ENCODE measurements at regions of chr16 and their contacts with region 1.

Region 1: DNA sequence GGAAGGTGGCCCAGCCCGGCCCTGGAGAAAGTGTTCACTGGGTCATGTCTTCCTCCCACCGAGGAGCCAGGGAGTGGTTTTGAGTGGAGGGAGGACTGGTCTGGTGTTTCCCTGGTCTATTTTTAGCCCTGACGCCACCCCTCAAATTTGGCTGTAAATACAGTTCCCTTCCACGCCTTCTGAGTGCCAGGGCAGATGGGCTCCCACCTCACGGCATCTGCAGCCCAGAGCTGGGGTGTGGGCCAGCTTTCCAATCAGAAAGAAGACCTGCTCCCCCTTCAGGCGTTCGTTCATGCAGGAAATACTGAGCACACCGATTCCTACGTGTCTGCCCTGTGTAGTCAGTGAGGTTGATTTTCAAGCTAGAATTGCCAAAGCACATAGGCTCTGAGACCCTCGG is 53.7 kb downstream of the SNX20 start:
- DNase-seq: peak in 7 of 9 donors; percentile 29 to 67 (median 57)
- ATAC-seq: peak; percentile 78
- H3K4me3 ChIP-seq: peak overlapping the region; percentile 29
- H3K4me3 Mint-ChIP-seq: peak overlapping the region; percentile 68 to 90 (median 84)
- H3K27ac ChIP-seq: peak overlapping the region; percentile 43
- H3K27ac Mint-ChIP-seq: peak overlapping the region; percentile 71 to 95 (median 88)
- H3K4me1 ChIP-seq: peaks cover 0 to 45% of the 10 kb centered on the region in 2 donors
- H3K4me1 Mint-ChIP-seq: peaks cover 29 to 50% (median 44%) of the 10 kb centered on the region in 7 donors
- H3K27me3 ChIP-seq: no peaks in the 10 kb centered on the region
- H3K27me3 Mint-ChIP-seq: no peaks in the 10 kb centered on the region

Region 2: DNA sequence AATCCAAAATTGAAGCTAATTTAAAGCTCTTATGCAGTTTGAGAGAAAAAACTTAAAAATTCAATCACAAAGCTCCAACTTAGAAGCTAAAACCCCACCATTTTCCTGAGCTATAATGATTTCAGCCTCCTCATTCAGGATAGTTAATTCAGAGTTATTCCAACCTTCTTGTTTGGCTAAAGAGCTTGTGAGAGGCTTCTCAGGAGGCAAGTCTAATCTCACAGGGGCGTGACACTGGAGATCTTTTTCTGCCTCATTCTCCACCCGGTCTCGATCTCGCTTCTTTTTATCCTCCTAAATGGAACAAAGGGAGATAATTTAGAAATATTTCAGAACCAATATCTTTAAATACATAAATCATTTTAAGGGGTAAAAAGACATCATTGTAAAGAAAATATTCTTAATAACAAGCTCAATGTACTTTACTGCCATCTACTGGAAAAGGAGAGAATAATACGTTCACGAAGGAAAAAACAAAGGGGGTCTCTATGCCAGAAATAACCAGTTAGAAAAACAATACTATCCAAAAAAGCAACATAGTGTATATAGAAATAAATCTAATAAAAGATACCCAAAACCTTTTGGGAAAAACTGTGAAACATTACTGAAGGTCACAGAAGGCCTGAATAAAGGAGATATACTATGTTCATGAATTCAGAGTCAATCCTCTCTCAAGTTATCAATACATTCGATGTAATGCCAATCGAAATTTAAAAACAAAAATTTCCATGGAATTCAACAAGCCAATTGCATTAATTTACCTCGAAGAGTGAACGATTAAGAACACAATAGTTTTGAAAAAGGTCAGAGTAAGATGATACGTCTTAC is 272.6 kb before region 1 on chr16:
- CTCF ChIA-PET with region 1: interaction called, 4 read pairs
- POLR2A ChIA-PET with region 1: interaction called, 3 read pairs
- intact Hi-C with region 1: loop called in 1 of 2 experiments (anchors 1 kb)
- DNase-seq: peak in 5 of 9 donors; percentile 32 to 63 (median 51)
- ATAC-seq: peak; percentile 68
- H3K4me3 ChIP-seq: no peak overlapping the region
- H3K4me3 Mint-ChIP-seq: peak overlapping the region in 1 of 10 donors; percentile 21
- H3K27ac ChIP-seq: peak overlapping the region; percentile 31
- H3K27ac Mint-ChIP-seq: peak overlapping the region in 8 of 9 donors; percentile 2 to 91 (median 68)
- H3K4me1 ChIP-seq: no peaks in the 10 kb centered on the region
- H3K4me1 Mint-ChIP-seq: peaks cover 9 to 41% (median 25%) of the 10 kb centered on the region in 7 donors
- H3K27me3 ChIP-seq: no peaks in the 10 kb centered on the region
- H3K27me3 Mint-ChIP-seq: no peaks in the 10 kb centered on the region

Region 3: DNA sequence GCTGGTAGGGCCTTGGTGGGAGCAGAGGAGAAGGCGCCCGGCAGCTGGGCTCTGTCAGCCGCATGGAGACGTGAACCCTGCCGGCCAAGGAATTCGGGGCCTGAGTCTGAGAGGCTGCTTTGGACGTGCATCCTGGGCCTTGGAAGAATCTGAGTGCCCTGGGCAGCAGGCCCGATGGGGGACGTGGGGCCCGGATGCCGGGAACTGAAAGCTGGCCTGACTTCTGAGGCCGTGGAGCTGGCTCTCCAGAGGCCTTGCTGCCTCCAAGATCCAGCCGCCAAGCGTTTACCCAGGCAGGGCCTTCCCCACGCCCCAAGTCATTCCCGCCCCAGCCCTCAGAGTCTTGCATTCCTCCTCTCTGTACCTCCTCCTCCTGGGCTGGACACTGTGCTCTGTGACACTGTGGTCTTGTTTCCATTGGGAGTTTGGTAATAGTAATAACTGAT is 42.1 kb before region 1 on chr16:
- CTCF ChIA-PET with region 1: interaction called, 4 read pairs
- POLR2A ChIA-PET with region 1: no interaction called
- intact Hi-C with region 1: loop called in 1 of 2 experiments (anchors 2 kb)
- DNase-seq: no peak
- ATAC-seq: no peak
- H3K4me3 ChIP-seq: no peak overlapping the region
- H3K4me3 Mint-ChIP-seq: no peak overlapping the region
- H3K27ac ChIP-seq: no peak overlapping the region
- H3K27ac Mint-ChIP-seq: no peak overlapping the region
- H3K4me1 ChIP-seq: peaks cover 0 to 32% of the 10 kb centered on the region in 2 donors
- H3K4me1 Mint-ChIP-seq: peaks cover 20 to 54% (median 39%) of the 10 kb centered on the region in 7 donors
- H3K27me3 ChIP-seq: no peaks in the 10 kb centered on the region
- H3K27me3 Mint-ChIP-seq: no peaks in the 10 kb centered on the region

Region 4: GRCh38 chr16:50603206-50604064 is 24.0 kb before region 1 on chr16:
- CTCF ChIA-PET with region 1: no interaction called
- POLR2A ChIA-PET with region 1: interaction called, 4 read pairs
- intact Hi-C with region 1: loop called in 1 of 2 experiments (anchors 1 kb)
- DNase-seq: no peak
- ATAC-seq: no peak
- H3K4me3 ChIP-seq: no peak overlapping the region
- H3K4me3 Mint-ChIP-seq: peak overlapping the region in 8 of 10 donors; percentile 49 to 79 (median 68)
- H3K27ac ChIP-seq: peak overlapping the region; percentile 43
- H3K27ac Mint-ChIP-seq: peak overlapping the region in 8 of 9 donors; percentile 78 to 96 (median 82)
- H3K4me1 ChIP-seq: peaks cover 13 to 35% of the 10 kb centered on the region in 2 donors
- H3K4me1 Mint-ChIP-seq: peaks cover 14 to 59% (median 47%) of the 10 kb centered on the region in 7 donors
- H3K27me3 ChIP-seq: no peaks in the 10 kb centered on the region
- H3K27me3 Mint-ChIP-seq: no peaks in the 10 kb centered on the region

Region 5: DNA sequence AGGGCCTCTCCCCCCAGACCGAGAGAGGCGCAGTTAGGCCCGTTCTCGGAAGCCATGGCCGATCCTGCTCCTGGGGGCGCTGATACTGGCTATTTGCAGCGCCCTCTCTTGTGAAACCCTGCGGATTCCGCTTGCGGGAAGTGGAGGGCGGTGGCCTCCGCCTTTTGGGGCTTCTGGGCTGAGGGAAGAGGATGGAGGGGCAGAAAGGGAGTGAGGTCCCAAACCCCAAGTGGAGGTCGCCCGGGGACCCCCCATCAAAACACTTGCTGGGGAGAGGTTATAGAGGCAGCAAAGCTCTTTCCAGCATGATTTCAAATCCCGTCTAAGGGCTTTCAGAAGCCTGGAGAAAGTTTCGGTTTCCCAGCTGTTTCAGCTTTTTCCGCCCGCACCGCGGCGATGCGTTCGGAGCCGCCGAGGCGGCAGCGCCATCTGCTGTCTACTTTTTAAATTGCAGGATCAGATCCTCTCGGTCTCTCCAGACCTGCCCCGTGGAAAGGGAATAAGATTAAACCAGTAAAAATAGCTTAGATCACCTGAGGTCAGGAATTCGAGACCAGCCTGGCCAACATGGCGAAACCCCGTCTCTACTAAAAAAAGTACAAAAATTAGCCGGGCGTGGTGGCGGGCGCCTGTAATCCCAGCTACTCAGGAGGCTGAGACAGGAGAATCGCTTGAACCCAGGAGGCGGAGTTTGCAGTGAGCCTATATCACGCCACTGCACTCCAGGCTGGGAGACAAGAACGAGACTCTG is 37.9 kb after region 1 on chr16:
- CTCF ChIA-PET with region 1: interaction called, 4 read pairs
- POLR2A ChIA-PET with region 1: interaction called, 3 read pairs
- intact Hi-C with region 1: loop called in 1 of 2 experiments (anchors 2 kb)
- DNase-seq: peak; percentile 71 to 90 (median 77)
- ATAC-seq: peak; percentile 80
- H3K4me3 ChIP-seq: peak overlapping the region; percentile 60
- H3K4me3 Mint-ChIP-seq: peak overlapping the region; percentile 73 to 87 (median 84)
- H3K27ac ChIP-seq: peak overlapping the region; percentile 62
- H3K27ac Mint-ChIP-seq: peak overlapping the region; percentile 82 to 97 (median 89)
- H3K4me1 ChIP-seq: peaks cover 17% of the 10 kb centered on the region in 2 donors
- H3K4me1 Mint-ChIP-seq: peaks cover 28 to 49% (median 44%) of the 10 kb centered on the region in 7 donors
- H3K27me3 ChIP-seq: no peaks in the 10 kb centered on the region
- H3K27me3 Mint-ChIP-seq: no peaks in the 10 kb centered on the region

Region 6: GRCh38 chr16:50948268-50948930 is 321.0 kb after region 1 on chr16:
- CTCF ChIA-PET with region 1: no interaction called
- POLR2A ChIA-PET with region 1: no interaction called
- intact Hi-C with region 1: no loop called
- DNase-seq: no peak
- ATAC-seq: no peak
- H3K4me3 ChIP-seq: no peak overlapping the region
- H3K4me3 Mint-ChIP-seq: no peak overlapping the region
- H3K27ac ChIP-seq: no peak overlapping the region
- H3K27ac Mint-ChIP-seq: no peak overlapping the region
- H3K4me1 ChIP-seq: no peaks in the 10 kb centered on the region
- H3K4me1 Mint-ChIP-seq: no peaks in the 10 kb centered on the region
- H3K27me3 ChIP-seq: no peaks in the 10 kb centered on the region
- H3K27me3 Mint-ChIP-seq: peaks cover 2 to 20% (median 11%) of the 10 kb centered on the region in 5 donors

Measured in naive thymus-derived CD4-positive, alpha-beta T cell (primary cell).